Activated T-helper 1 cell treated with anti-CD3 and anti-CD28 coated beads, Interleukin-12 subunit alpha, Interleukin-12 subunit beta, Interleukin-2, Interleukin-4 antibody, amounts not matched to agents 30 ng/mL and 10 ng/mL and 1 ng/mL, durations not matched to agents 14 hours and 24 hours and 36 hours (primary cell): ENCODE measurements at regions of chr6 and their contacts with region 1.

Region 1: DNA sequence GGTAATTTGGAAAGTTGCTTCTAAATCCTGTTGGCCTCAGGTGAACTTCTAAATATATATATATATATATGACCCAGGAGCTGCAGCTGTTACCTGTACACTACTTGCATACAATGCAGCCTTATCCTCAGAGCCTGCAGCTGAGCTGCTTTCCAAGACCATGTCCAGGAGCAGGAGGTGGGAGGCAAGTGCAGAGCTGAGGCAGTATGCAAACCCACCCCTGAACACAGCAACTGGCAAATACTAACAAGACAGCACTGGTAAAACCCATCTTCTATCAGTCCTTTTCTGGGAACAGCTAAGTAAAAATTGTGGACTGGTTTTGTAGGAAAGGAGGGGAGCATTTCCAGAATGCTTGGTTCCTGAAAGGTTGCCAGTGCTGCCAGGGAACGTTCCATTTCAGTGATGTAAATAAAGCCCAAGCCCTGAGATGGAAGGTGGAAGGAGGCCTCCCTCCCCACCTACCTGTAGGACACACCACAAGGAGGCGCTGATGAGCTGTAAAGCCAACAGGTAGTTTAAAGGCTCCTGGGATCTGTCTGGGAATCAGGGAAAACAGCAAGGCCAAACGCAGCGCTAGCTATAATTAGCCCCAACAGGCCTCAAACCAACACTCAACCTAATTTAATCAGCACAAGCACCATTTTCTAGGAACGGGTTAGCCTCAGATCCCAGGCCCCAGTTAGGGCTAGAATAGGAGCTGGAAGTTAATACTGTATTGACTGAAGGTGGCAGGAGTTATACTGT is 93.8 kb upstream of the MAP7 start:
- DNase-seq: peak; percentile 62
- H3K4me3 Mint-ChIP-seq: no peak overlapping the region
- H3K27ac Mint-ChIP-seq: no peak overlapping the region
- H3K4me1 Mint-ChIP-seq: peaks cover 5% of the 10 kb centered on the region
- H3K27me3 Mint-ChIP-seq: no peaks in the 10 kb centered on the region

Region 2: DNA sequence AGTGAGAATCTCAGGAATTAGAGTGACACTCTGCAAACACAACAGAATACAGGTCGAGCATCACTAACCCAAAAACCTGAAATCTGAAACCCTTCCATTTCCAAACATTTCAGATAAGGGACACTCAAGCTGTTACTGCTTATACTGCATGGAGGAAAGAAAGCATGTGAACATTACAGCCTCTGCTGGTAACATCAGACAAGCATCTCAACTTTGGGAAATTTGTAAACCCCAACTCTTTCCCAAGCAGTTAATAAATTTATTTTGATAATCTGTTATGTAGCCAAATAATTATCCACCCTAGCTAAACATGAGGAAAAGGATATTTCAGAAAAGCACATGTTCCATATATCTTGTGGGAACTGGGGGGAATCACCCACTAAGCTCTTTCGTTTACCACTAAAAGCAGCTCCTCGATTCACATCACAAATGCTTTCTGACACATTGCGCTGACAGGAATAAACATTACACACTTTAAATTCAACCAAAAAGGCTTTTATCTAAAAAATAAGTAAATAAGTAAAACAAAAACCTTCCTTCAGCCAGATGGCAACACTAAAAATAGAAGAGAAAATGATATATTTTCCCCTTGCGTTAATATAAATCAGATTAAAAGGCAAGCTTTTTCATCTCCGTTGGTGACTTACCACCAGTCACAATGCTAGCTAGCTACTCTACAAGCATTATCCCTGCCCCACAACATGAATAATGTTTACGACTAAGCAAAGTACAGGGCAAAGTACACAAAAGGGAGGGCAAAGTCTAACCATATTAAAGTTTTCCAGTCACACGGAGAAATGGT is 214.6 kb before region 1 on chr6:
- intact Hi-C with region 1: no loop called
- DNase-seq: no peak
- H3K4me3 Mint-ChIP-seq: no peak overlapping the region
- H3K27ac Mint-ChIP-seq: no peak overlapping the region
- H3K4me1 Mint-ChIP-seq: no peaks in the 10 kb centered on the region
- H3K27me3 Mint-ChIP-seq: peaks cover 13% of the 10 kb centered on the region

Region 3: DNA sequence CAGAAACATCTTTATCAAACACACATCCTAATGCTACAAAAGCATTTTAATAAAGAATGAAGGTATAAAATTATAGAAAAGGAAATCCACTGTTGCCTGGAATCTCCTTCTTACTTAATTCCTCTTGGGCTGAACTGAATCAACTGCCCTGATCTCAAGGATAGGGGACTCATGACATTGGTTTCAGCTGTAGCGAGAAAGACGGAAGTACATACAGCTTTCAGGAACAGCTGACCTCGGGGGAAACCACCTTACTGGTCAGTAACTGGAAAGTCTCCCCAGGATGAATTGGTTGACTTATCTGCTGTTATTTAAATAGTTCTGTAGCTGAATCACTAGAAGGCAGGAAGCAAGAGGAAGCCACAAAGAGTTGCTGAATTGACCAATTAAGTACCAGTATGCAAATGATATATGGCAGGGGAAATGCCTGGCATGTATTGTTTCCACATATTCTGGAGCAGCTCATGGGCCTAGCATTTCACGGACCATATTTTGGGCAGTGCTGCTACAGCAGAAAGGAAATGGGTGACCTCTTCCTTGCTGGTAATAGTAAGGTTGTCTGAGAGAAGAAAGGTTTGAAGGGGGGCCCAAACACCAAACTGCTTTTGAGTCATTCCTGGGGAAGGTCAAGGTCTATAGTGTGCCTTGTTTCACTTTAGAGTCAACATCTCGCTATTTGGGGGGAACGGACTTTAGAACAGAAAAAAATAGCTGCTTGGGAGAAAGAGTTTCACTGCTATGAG is 50.1 kb before region 1 on chr6:
- intact Hi-C with region 1: loop called (anchors 1 kb)
- DNase-seq: peak; percentile 56
- H3K4me3 Mint-ChIP-seq: peak overlapping the region; percentile 75
- H3K27ac Mint-ChIP-seq: peak overlapping the region; percentile 96
- H3K4me1 Mint-ChIP-seq: peaks cover 54% of the 10 kb centered on the region
- H3K27me3 Mint-ChIP-seq: no peaks in the 10 kb centered on the region

Region 4: DNA sequence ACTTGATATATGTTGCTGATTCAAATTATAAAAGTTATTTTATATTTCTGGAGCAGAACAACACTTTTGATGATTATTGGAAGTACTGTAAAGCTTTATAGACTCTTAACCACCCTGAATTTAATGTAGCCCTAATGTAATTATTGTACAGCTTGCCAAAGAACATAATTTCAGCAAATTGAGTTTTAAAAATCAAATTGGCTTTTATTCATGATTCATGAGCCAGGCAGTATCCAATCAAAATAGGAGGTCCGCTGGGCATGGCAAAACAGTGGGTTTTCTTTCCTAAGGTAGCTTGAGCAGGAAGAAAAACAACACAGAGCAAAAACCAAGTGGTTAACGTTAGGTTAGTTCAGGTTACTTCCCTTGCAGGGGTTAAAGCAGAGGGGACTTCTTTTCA is 29.0 kb before region 1 on chr6:
- intact Hi-C with region 1: no loop called
- DNase-seq: no peak
- H3K4me3 Mint-ChIP-seq: no peak overlapping the region
- H3K27ac Mint-ChIP-seq: no peak overlapping the region
- H3K4me1 Mint-ChIP-seq: peaks cover 7% of the 10 kb centered on the region
- H3K27me3 Mint-ChIP-seq: no peaks in the 10 kb centered on the region

Region 5: DNA sequence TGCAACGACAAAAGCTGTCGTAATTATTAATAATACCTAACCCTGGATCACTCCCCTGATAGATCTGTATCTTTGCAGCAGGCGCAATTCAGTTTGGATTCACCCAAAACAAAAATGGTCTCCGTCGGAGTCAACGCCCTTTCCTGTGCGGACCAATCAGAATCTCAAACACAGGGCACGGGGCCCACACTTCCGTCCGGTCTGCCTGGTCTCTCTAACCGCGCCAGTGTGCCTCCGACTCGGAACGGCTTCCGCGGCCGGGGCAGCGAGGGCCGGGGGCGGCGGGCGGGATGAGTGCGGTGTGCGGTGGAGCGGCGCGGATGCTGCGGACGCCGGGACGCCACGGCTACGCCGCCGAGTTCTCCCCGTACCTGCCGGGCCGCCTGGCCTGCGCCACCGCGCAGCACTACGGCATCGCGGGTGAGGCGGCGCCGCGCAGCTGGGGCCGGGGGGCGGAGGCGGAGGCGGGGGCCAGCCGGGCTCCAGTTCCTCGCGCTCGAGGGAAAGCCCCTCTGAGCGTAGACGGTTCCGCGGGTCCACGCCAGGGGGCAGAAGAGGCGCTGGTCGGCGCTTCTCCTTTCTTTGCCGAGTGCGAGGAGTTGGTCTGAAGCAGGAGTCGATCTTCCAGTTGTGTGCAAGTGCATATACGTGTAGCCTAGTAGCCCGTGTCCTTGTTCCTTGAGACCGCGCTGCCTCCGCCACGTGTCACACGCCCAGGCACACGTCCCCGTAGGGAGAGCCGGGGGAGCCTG is 178.5 kb after region 1 on chr6 and contains the start of gene PEX7:
- intact Hi-C with region 1: loop called (anchors 1 kb)
- DNase-seq: peak; percentile 85
- H3K4me3 Mint-ChIP-seq: peak within 1 kb of the TSS; percentile 91
- H3K27ac Mint-ChIP-seq: peak within 1 kb of the TSS; percentile 92
- H3K4me1 Mint-ChIP-seq: peaks cover 12% of the 10 kb centered on the region
- H3K27me3 Mint-ChIP-seq: peaks cover 6% of the 10 kb centered on the region
- total RNA-seq, gene PEX7: 3.7 and 4.2 TPM in 2 replicates

Region 6: GRCh38 chr6:136927292-136927691 is 283.3 kb after region 1 on chr6:
- intact Hi-C with region 1: loop called (anchors 10 kb)
- DNase-seq: no peak
- H3K4me3 Mint-ChIP-seq: no peak overlapping the region
- H3K27ac Mint-ChIP-seq: no peak overlapping the region
- H3K4me1 Mint-ChIP-seq: no peaks in the 10 kb centered on the region
- H3K27me3 Mint-ChIP-seq: peaks cover 42% of the 10 kb centered on the region